ENCODE measurements at regions of chrX and their contacts with region 1.

Region 1: GRCh38 chrX:153744214-153744724 is 19.6 kb downstream of the ABCD1 start:
- DNase-seq: peak; percentile 72
- H3K4me3 ChIP-seq: peak overlapping the region in 3 of 4 donors; percentile 16 to 31 (median 23)
- H3K27ac ChIP-seq: peak overlapping the region; percentile 51 to 84 (median 82)
- H3K4me1 ChIP-seq: peaks cover 0 to 16% (median 15%) of the 10 kb centered on the region in 4 donors
- H3K27me3 ChIP-seq: no peaks in the 10 kb centered on the region
- CTCF ChIP-seq: no peak
- EP300 ChIP-seq: no peak
- POLR2A ChIP-seq: no peak

Region 2: DNA sequence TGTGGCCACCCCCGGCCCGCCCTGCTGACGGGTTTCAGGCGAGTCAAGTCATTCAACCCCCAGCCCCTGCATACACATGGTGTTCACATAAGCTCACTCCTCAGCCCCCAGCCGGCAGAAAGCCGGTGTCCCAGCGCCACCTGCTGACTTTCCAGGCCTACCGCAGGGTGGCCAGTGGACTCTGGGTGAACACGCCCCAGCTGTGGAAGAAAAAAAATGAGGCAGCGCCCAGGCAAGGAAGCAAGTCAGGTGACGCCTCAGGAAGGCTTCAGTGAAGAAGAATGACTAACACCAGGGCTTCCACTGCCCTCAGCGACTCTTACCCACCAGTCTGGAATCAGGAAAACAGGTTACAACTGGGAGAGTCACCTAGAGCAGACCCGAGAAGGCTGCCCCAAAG is 35.9 kb before region 1 on chrX:
- intact Hi-C with region 1: no loop called
- DNase-seq: peak; percentile 89
- H3K4me3 ChIP-seq: no peak overlapping the region
- H3K27ac ChIP-seq: peak overlapping the region in 2 of 4 donors; percentile 34 to 53
- H3K4me1 ChIP-seq: peaks cover 0 to 25% (median 8%) of the 10 kb centered on the region in 4 donors
- H3K27me3 ChIP-seq: no peaks in the 10 kb centered on the region
- CTCF ChIP-seq: peak; percentile 55 to 62 (median 61)
- EP300 ChIP-seq: no peak
- POLR2A ChIP-seq: no peak

Region 3: DNA sequence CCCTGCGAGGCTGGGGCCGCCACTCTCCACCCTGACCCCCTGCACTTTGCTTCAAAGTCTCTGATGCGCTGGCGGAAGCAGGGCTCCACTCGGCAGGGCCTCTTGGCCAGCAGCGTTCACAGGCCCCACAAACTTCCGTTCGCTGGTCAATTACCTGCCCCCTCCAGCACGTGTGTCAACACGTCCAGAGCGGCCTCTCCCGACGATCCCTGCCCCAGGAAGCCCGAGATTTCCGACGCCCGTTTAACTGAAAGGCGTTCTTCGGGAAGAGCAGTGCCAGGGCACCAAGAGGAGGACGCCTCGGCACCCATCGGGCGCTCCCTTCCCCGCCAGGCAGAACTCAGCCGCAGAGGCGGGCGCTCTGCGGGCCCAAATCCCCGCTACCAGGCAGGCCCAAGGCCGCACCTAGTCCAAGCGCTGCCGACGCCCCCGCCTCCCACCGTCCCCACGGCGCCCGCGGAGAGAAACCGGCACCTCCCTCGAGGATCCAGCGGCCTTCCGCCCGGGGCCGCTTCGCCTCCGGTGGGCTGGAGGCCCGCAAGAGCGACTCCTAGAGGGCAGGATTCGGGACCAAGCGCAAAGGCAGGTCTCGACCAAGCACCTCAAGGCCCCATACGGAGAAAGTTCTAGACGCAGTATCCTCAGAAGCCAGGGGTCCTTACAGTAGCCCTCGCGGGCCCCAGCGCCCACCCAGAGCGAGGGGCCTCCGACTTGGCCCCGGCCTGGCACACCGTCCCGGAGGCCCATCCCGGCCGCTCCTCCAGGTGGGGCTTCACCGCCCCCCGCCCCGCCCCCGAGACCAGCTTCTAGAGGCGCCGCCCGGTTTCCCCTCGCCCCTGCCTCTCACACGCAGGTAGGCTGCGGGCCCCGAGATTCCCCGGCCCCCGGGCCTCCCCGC is 20.7 kb before region 1 on chrX:
- intact Hi-C with region 1: loop called (anchors 2 kb)
- DNase-seq: no peak
- H3K4me3 ChIP-seq: peak overlapping the region; percentile 62 to 78 (median 72)
- H3K27ac ChIP-seq: peak overlapping the region; percentile 86 to 93 (median 91)
- H3K4me1 ChIP-seq: peaks cover 0 to 52% (median 49%) of the 10 kb centered on the region in 4 donors
- H3K27me3 ChIP-seq: no peaks in the 10 kb centered on the region
- CTCF ChIP-seq: peak in 1 of 4 experiments; percentile 17
- EP300 ChIP-seq: no peak
- POLR2A ChIP-seq: no peak

Region 4: GRCh38 chrX:153971450-153972367 is 227.4 kb after region 1 on chrX and contains the start of gene HCFC1:
- intact Hi-C with region 1: no loop called
- DNase-seq: peak; percentile 98
- H3K4me3 ChIP-seq: peak within 1 kb of the TSS; percentile 55 to 78 (median 74)
- H3K27ac ChIP-seq: peak within 1 kb of the TSS; percentile 97 to 98 (median 98)
- H3K4me1 ChIP-seq: peaks cover 0 to 48% (median 42%) of the 10 kb centered on the region in 4 donors
- H3K27me3 ChIP-seq: peaks cover 0 to 5% (median 0%) of the 10 kb centered on the region in 3 donors
- CTCF ChIP-seq: no peak
- EP300 ChIP-seq: no peak
- POLR2A ChIP-seq: peak; percentile 7
- total RNA-seq, gene HCFC1: 23.5 to 57.3 (median 30.2) TPM